GM12878 (cell line): ENCODE measurements at regions of chr1 and their contacts with region 1.

Region 1: DNA sequence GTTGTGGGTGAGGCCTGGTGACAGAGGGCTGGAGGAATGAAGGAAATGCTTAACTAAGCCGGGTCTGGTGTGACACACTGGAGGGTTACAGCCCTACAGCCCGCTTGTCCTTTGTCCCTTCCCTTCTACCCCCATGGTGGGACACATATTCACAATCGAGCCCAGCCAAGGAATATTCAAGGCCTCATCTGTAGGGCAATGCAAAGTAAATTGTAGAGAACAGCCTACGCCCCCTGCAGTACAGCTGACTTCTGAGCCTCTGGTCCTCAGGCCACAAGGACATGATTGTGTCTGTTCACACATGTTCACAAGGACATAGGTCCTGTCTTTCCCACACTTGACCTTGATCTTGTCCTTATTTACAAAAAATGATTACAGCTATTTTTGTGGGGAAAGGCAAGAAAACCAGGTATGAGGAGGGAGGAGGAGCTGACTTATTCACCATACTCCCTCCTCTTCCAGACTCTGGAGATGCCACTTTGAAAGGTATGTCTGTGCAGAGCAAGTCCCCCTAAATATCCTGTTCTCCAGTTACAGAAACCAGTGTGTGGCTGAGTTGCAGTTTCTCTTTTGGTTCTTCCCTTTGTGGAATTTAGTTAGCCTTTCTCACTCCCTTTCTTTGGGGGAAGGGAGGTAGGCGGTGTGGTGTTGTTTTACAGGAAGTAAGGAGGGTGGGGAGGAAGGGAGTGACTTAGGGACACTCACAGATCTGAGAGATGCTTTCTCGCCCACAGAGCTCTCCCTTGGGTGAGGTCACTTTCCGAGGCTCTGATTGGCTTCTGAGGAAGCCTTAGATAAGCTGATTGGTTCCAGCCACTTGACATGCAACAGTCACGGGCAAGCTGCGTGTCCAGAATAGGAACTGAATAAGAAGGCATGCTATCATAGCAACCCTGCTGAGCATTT is 14.6 kb downstream of the POLR3GL start:
- DNase-seq: peak; percentile 99
- ATAC-seq: peak; percentile 92
- H3K4me3 ChIP-seq: no peak overlapping the region; the same call in 1 of the 2 replicates
- H3K27ac ChIP-seq: peak overlapping the region; percentile 99
- H3K4me1 ChIP-seq: peaks cover 54% of the 10 kb centered on the region
- H3K27me3 ChIP-seq: no peaks in the 10 kb centered on the region
- CTCF ChIP-seq: peak; percentile 34 to 42 (median 35); a peak in 4 of 6 replicates
- EP300 ChIP-seq: peak; percentile 34 to 71; a peak in 1 of 4 replicates
- POLR2A ChIP-seq: no peak; the same call in none of the 2 replicates
- RAD21 ChIP-seq: no peak

Region 2: DNA sequence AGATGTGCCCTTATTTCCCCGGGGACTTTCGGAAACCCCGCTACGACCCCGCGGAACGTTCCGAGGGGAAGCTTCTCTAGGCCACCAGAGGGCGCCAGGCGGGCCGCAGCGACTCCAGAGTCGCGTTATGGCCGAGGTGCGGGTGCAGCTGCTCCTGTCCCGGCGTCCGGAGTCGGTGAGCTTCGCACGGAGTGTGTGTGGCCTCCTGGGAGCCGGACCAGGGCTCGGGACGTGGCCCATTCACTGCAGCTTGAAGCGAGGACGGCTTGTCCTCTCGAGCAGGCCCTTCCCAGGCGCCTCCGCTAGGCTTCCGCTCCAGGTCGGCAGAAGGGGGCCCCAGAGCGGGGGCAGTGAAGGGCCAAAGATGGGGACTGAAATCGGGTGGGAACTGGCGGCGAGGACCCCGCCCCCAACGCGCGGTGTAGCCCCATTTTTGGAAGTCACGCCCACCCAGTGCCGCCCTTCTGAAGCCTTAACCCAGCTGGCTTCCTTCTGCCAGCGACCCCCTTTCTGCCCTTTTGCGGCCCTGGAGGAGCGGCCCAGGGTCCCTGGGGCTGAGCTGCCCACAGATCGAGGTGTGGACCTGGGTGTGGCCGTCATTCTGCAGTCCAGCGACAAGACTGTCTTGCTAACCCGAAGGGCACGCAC is 133.5 kb before region 1 on chr1 and contains the start of gene NUDT17:
- CTCF ChIA-PET with region 1: interaction called, 44 read pairs
- POLR2A ChIA-PET with region 1: no interaction called
- RAD21 ChIA-PET with region 1: interaction called, 9 read pairs
- SMC1A ChIA-PET with region 1: interaction called, 9 read pairs
- in situ Hi-C with region 1: no loop called
- intact Hi-C with region 1: no loop called
- DNase-seq: no peak
- ATAC-seq: peak; percentile 87
- H3K4me3 ChIP-seq: peak within 1 kb of the TSS; percentile 89
- H3K27ac ChIP-seq: peak within 1 kb of the TSS; percentile 83
- H3K4me1 ChIP-seq: peaks cover 15% of the 10 kb centered on the region
- H3K27me3 ChIP-seq: no peaks in the 10 kb centered on the region
- CTCF ChIP-seq: peak; percentile 87 to 94 (median 92)
- EP300 ChIP-seq: no peak
- POLR2A ChIP-seq: peak; percentile 81
- RAD21 ChIP-seq: peak; percentile 44
- polyA plus RNA-seq, gene NUDT17: 1.2 to 2.6 TPM

Region 3: GRCh38 chr1:145891587-145892485 is 87.3 kb before region 1 on chr1:
- CTCF ChIA-PET with region 1: interaction called, 21 read pairs
- POLR2A ChIA-PET with region 1: no interaction called
- RAD21 ChIA-PET with region 1: interaction called, 3 read pairs
- SMC1A ChIA-PET with region 1: interaction called, 12 read pairs
- in situ Hi-C with region 1: no loop called
- intact Hi-C with region 1: no loop called
- DNase-seq: no peak
- ATAC-seq: peak; percentile 95
- H3K4me3 ChIP-seq: no peak overlapping the region
- H3K27ac ChIP-seq: no peak overlapping the region
- H3K4me1 ChIP-seq: no peaks in the 10 kb centered on the region
- H3K27me3 ChIP-seq: no peaks in the 10 kb centered on the region
- CTCF ChIP-seq: peak; percentile 89 to 90 (median 90)
- EP300 ChIP-seq: no peak
- POLR2A ChIP-seq: no peak
- RAD21 ChIP-seq: peak; percentile 81

Region 4: DNA sequence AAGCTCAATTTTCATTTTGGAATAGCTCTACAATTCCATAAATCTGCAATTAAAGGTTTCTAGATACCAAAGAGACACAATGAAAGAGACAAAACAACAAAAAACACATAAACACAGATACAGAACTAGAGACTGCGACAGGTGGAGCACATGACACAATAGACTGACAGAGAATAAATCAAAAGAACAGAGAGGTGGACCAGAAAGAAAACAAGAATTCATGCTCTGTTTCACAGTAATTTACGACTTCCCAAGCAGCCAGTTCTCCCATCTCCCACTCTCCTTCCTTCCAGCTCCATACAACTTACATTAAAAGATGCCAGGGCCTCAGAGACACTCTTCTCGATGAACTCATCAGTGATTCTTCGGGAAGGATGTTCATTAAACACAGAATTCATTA is 36.7 kb before region 1 on chr1:
- CTCF ChIA-PET with region 1: no interaction called
- POLR2A ChIA-PET with region 1: no interaction called
- RAD21 ChIA-PET with region 1: no interaction called
- SMC1A ChIA-PET with region 1: no interaction called
- in situ Hi-C with region 1: no loop called
- intact Hi-C with region 1: no loop called
- DNase-seq: no peak
- ATAC-seq: no peak
- H3K4me3 ChIP-seq: no peak overlapping the region
- H3K27ac ChIP-seq: no peak overlapping the region
- H3K4me1 ChIP-seq: no peaks in the 10 kb centered on the region
- H3K27me3 ChIP-seq: no peaks in the 10 kb centered on the region
- CTCF ChIP-seq: no peak
- EP300 ChIP-seq: no peak
- POLR2A ChIP-seq: no peak
- RAD21 ChIP-seq: no peak

Region 5: DNA sequence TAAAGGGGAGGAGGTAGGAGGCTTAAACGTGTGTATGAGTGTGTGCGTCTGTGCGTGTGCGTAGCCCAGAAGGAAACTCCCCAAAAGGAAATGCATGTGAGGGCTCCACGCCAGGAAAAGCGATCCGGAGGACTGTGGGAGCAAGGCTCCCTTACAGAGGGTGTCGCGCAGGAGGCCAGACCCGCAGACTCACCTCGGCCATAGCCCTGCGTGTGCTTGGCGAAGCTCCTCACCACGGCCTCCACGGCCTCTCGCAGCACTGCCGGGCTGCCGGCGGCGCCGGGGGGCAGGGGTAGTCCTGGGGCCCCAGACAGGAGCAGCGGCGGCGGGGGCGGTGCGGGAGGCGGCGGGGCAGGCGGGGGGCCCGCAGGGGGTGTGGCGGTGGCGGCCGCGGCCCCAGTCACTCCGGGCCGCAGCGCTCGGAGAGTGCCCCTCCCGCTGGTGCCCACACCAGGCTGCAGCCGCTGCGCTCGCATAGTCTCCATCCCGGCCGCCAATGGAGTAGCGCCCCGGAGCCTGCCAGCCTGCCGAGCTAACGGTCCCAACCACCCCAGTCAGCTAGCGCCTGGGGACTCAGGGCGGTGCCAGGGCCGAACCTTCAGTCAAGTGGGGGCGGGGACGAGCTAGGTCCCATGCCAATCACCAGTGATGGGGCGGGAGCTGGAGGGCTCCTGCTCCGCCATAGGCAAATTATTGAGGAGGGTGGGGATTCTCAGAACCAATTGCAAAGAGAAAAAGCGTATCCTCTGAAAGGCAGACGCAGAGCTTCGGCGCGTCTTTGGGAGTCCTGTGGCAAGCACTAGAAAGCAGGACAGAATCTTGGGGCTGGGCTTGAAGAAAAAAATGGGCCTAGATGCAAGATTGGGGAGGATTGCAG is 21.4 kb before region 1 on chr1 and contains the start of gene LIX1L:
- CTCF ChIA-PET with region 1: interaction called, 65 read pairs
- POLR2A ChIA-PET with region 1: interaction called, 102 read pairs
- RAD21 ChIA-PET with region 1: interaction called, 100 read pairs
- SMC1A ChIA-PET with region 1: interaction called, 93 read pairs
- in situ Hi-C with region 1: no loop called
- intact Hi-C with region 1: loop called (anchors 2 kb)
- DNase-seq: peak; percentile 89
- ATAC-seq: peak; percentile 90
- H3K4me3 ChIP-seq: peak within 1 kb of the TSS; percentile 78
- H3K27ac ChIP-seq: peak within 1 kb of the TSS; percentile 73
- H3K4me1 ChIP-seq: peaks cover 8% of the 10 kb centered on the region
- H3K27me3 ChIP-seq: no peaks in the 10 kb centered on the region; a peak in 1 of 4 replicates
- CTCF ChIP-seq: no peak
- EP300 ChIP-seq: no peak
- POLR2A ChIP-seq: peak; percentile 86
- RAD21 ChIP-seq: no peak
- polyA plus RNA-seq, gene LIX1L: 5.5 to 12.2 TPM

Region 6: GRCh38 chr1:145996433-145997015 is 17.4 kb after region 1 on chr1 and contains the start of gene TXNIP:
- CTCF ChIA-PET with region 1: interaction called, 361 read pairs
- POLR2A ChIA-PET with region 1: interaction called, 82 read pairs
- RAD21 ChIA-PET with region 1: interaction called, 100 read pairs
- SMC1A ChIA-PET with region 1: interaction called, 244 read pairs
- in situ Hi-C with region 1: no loop called
- intact Hi-C with region 1: no loop called
- DNase-seq: peak; percentile 51
- ATAC-seq: peak; percentile 92
- H3K4me3 ChIP-seq: peak within 1 kb of the TSS; percentile 81
- H3K27ac ChIP-seq: peak within 1 kb of the TSS; percentile 82
- H3K4me1 ChIP-seq: peaks cover 8% of the 10 kb centered on the region
- H3K27me3 ChIP-seq: no peaks in the 10 kb centered on the region
- CTCF ChIP-seq: no peak
- EP300 ChIP-seq: no peak; a peak in 1 of 4 replicates
- POLR2A ChIP-seq: peak; percentile 86
- RAD21 ChIP-seq: no peak
- polyA plus RNA-seq, gene TXNIP: 48.7 to 75.5 TPM

Region 7: DNA sequence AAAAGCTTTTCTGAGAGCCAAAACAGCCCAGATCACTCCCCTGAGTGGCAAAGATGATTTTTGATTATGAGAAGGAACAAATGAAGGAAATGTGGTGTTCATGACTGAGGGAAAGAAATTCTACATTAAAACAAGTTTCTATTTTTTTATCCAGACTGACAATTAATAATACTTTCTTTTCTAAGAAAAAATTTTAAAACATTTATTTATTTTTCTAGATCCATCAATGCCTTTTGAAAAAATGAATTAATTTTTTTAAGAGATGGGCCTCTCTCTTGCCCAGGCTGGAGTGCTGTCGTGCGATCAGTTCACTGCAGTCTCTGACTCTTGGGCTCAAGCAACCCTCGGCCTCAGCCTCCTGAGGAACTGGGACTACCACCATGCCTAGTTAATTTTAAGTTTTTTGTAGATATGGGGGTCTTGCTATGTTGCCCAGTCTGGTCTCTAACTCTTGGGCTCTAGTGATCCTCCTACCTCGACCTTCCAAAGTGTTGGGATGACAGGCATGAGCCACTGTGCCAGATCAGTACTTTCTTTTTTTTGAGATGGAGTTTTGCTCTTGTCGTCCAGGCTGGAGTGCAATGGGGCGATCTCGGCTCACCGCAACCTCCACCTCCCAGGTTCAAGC is 28.5 kb after region 1 on chr1:
- CTCF ChIA-PET with region 1: interaction called, 361 read pairs
- POLR2A ChIA-PET with region 1: interaction called, 26 read pairs
- RAD21 ChIA-PET with region 1: interaction called, 136 read pairs
- SMC1A ChIA-PET with region 1: interaction called, 180 read pairs
- in situ Hi-C with region 1: loop called (anchors 5 kb)
- intact Hi-C with region 1: loop called (anchors 1 kb)
- DNase-seq: no peak
- ATAC-seq: no peak
- H3K4me3 ChIP-seq: no peak overlapping the region
- H3K27ac ChIP-seq: no peak overlapping the region
- H3K4me1 ChIP-seq: no peaks in the 10 kb centered on the region
- H3K27me3 ChIP-seq: no peaks in the 10 kb centered on the region
- CTCF ChIP-seq: no peak
- EP300 ChIP-seq: no peak
- POLR2A ChIP-seq: no peak
- RAD21 ChIP-seq: no peak

Region 8: GRCh38 chr1:146019231-146020057 is 40.3 kb after region 1 on chr1:
- CTCF ChIA-PET with region 1: interaction called, 361 read pairs
- POLR2A ChIA-PET with region 1: interaction called, 3 read pairs
- RAD21 ChIA-PET with region 1: interaction called, 5 read pairs
- SMC1A ChIA-PET with region 1: interaction called, 20 read pairs
- in situ Hi-C with region 1: no loop called
- intact Hi-C with region 1: no loop called
- DNase-seq: no peak
- ATAC-seq: no peak
- H3K4me3 ChIP-seq: no peak overlapping the region
- H3K27ac ChIP-seq: no peak overlapping the region
- H3K4me1 ChIP-seq: no peaks in the 10 kb centered on the region
- H3K27me3 ChIP-seq: peaks cover 4 to 8% of the 10 kb centered on the region in 2 experiments; a peak in 3 of 4 replicates
- CTCF ChIP-seq: no peak
- EP300 ChIP-seq: no peak
- POLR2A ChIP-seq: no peak
- RAD21 ChIP-seq: no peak